ENCODE measurements at regions of chr16 and their contacts with region 1.

Region 1: DNA sequence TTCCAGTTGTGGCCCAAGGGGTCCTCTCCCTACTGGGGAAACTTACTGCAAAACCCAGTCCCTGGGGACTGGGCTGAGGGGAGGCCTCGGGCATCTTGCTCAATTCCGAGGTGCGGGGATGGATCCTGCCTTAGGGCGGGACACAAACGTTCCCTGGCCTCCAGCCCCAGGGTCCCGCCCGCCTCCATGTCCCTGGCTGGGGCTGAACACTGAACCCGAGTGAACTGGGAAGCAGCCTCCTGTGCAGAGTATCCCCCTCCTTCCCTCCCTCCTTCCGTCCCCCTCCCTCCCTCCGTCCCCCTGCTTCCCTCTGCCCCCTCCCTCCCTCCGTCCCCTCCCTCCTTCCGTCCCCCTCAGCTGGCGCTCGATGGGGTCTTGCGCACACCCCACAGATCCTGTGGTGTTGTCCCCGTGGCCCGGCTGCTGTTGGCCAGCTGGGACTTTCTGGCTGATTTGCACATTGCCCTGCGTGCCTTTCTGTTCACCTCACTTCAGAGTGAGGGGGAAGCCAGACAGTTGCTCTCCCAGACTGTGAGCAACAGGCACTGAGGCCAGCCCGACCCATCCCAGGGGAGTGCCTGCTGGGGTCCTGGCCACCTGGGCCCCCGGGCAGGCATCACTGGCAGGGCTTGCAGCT is 5.5 kb downstream of the TRAF7 start:
- DNase-seq: no peak
- ATAC-seq: no peak
- H3K4me3 ChIP-seq: no peak overlapping the region
- H3K27ac ChIP-seq: no peak overlapping the region
- H3K4me1 ChIP-seq: peaks cover 13 to 21% (median 15%) of the 10 kb centered on the region in 3 donors
- H3K27me3 ChIP-seq: no peaks in the 10 kb centered on the region
- CTCF ChIP-seq: no peak

Region 2: DNA sequence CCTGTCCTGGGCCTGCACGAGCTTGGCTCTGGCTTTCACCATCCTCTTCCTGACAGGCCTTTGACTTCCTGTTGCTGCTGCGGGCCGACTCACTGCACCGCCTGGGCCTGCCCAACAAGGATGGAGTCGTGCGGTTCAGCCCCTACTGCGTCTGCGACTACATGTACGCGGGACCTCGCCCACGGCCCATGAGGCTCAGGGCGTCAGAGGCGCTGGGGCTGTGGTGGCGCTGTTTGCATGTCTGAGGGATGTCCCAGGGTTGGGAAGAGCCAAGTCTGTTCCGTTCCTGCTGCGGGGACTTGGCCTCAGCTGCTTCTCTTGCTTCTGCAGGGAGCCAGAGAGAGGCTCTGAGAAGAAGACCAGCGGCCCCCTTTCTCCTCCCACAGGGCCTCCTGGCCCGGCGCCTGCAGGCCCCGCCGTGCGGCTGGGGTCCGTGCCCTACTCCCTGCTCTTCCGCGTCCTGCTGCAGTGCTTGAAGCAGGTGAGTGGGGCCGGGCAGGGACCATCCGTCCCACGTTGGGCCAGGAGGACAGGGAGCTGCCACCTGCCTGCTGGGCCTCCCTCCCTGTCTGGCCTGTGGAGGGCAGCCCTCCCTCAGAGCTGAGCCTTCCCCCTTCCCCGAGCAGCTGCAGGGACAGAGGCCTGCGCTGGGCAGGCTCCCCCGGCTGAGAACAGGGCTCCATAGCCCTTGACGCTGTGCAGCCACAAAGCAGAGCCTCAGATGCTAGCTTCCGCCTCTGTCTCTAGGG is 89.4 kb before region 1 on chr16:
- intact Hi-C with region 1: no loop called
- DNase-seq: peak in 2 of 6 donors; percentile 21 to 61
- ATAC-seq: peak in 1 of 4 donors; percentile 27
- H3K4me3 ChIP-seq: no peak overlapping the region
- H3K27ac ChIP-seq: no peak overlapping the region
- H3K4me1 ChIP-seq: no peaks in the 10 kb centered on the region
- H3K27me3 ChIP-seq: no peaks in the 10 kb centered on the region
- CTCF ChIP-seq: no peak

Region 3: DNA sequence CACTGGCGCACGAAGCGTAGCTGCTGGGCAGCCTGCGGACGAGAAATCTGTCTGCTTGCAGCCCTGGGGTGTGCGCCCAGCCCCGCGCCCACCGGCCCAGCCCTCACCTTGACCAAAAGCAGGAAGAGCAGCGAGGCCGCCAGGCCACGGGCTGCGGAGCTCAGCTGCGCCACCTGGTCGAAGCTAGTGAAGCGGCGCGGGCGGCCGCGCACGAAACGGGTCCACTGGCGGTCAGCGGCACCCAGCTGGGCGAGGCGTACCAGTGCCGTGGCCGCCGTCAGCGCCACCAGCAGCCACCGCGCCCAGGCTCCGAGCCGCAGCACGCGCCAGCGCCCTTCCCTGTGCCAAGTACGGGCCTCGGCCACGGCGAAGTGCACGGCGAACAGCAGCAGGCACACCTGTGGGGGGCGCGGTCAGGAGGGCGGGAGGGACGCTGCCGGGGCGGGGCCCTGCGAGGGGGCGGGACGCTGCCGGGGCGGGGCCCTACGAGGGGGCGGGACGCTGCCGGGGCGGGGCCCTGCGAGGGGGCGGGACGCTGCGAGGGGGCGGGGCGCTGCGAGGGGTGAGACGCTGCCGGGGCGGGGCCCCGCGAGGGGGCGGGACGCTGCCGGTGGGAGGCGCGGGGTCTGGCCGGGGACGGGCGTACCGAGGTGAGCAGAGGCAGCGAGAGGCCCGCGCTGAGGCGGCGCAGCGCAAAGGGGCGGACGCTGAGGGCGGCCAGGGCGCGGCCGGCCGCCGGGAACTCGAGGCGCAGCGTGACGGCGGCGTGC is 70.1 kb before region 1 on chr16:
- intact Hi-C with region 1: no loop called
- DNase-seq: peak; percentile 88 to 98 (median 96)
- ATAC-seq: peak; percentile 81 to 85 (median 82)
- H3K4me3 ChIP-seq: peak overlapping the region in 3 of 4 donors; percentile 23 to 45 (median 26)
- H3K27ac ChIP-seq: peak overlapping the region; percentile 59 to 85 (median 71)
- H3K4me1 ChIP-seq: peaks cover 0 to 12% (median 0%) of the 10 kb centered on the region in 3 donors
- H3K27me3 ChIP-seq: no peaks in the 10 kb centered on the region
- CTCF ChIP-seq: peak in 3 of 4 donors; percentile 14 to 22 (median 16)

Region 4: GRCh38 chr16:2176047-2176446 is 15.0 kb after region 1 on chr16:
- intact Hi-C with region 1: loop called in 1 of 3 experiments (anchors 2 kb)
- DNase-seq: no peak
- ATAC-seq: no peak
- H3K4me3 ChIP-seq: no peak overlapping the region
- H3K27ac ChIP-seq: no peak overlapping the region
- H3K4me1 ChIP-seq: no peaks in the 10 kb centered on the region
- H3K27me3 ChIP-seq: no peaks in the 10 kb centered on the region
- CTCF ChIP-seq: no peak

Measured in pancreas (tissue), 10 donors.